ENCODE measurements at regions of chr1 and their contacts with region 1.

Region 1: GRCh38 chr1:8217011-8217711 is 100.8 kb upstream of the SLC45A1 start:
- DNase-seq: peak; percentile 26
- H3K4me3 ChIP-seq: peak overlapping the region in 2 of 3 experiments; percentile 30 to 43
- H3K27ac ChIP-seq: peak overlapping the region; percentile 58
- H3K4me1 ChIP-seq: peaks cover 15% of the 10 kb centered on the region
- H3K27me3 ChIP-seq: no peaks in the 10 kb centered on the region
- CTCF ChIP-seq: no peak
- POLR2A ChIP-seq: no peak

Region 2: DNA sequence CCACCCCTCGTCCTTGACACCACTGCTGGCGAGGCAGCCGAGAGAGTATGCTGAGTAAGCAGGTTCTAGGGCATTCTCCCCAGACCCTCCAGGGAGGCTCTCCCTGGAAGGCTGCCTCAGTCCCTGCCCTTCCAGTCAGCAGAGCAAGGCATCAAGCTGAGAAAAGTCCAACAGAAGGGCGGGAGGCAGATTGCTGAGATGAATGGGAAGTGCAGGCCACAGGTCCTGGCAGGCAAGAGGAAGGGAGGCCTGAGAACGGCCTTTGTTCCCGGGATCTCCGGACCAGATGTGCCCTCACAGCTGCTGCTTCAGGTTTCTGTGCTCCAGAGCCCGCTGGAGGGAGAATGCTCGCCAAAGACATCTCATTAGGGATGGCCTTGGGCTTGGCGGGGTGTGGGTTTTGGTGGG is 716.1 kb before region 1 on chr1:
- CTCF ChIA-PET with region 1: no interaction called
- POLR2A ChIA-PET with region 1: no interaction called
- dilution Hi-C with region 1: no loop called
- intact Hi-C with region 1: no loop called
- DNase-seq: no peak
- H3K4me3 ChIP-seq: no peak overlapping the region
- H3K27ac ChIP-seq: no peak overlapping the region
- H3K4me1 ChIP-seq: no peaks in the 10 kb centered on the region
- H3K27me3 ChIP-seq: no peaks in the 10 kb centered on the region
- CTCF ChIP-seq: no peak
- POLR2A ChIP-seq: no peak

Region 3: GRCh38 chr1:8238851-8239305 is 21.7 kb after region 1 on chr1:
- CTCF ChIA-PET with region 1: no interaction called
- POLR2A ChIA-PET with region 1: no interaction called
- dilution Hi-C with region 1: no loop called
- intact Hi-C with region 1: loop called (anchors 2 kb)
- DNase-seq: peak; percentile 33
- H3K4me3 ChIP-seq: no peak overlapping the region
- H3K27ac ChIP-seq: peak overlapping the region; percentile 36
- H3K4me1 ChIP-seq: peaks cover 25% of the 10 kb centered on the region
- H3K27me3 ChIP-seq: no peaks in the 10 kb centered on the region
- CTCF ChIP-seq: peak; percentile 6 to 21
- POLR2A ChIP-seq: no peak

Measured in endothelial cell of umbilical vein (primary cell).